ENCODE measurements at regions of chr1 and their contacts with region 1.

Region 1: DNA sequence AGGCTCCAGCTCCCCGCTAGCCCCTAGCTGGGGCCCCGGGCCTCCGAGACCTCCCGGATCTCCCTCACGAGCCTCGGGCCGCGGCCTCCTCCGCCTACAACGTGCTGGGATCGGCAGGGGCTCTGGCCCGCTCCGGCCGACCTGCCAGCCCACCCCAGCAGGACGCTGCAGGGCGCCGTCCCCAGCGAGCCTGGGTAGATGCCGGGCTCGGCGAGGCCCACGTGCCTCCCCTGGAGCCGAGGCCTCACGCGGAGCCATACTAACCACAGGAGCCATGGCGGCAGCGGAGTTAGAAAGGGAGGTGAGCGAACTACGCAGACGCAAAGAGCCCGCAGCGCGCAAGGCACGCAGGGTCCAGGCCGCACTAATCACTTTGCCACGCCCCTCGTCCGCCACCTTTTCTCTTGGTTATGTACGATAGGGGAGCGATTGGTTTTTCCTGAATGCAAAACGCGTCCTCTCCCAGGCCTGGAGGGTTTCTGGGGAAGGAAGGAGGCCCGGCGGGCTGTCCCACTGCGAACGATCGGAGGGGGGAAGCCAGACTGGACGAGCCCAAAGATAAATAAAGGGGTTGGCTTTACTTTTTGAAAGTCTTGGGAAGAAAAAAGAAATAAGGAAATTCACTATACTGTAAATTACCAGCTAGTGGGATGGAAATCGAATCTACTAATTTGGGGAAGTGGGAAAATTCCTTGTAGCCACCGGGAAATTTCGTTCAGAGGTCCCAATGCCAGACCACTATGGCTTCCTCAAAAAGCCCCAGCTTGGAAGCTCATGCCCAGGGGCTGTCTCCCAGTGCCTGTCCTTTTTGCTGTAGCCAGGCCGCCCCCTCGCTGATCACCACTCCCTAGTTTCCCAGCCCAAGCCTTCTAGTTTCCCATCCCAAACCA is at the start of gene RPL22:
- DNase-seq: peak; percentile 98 to 99 (median 98)
- ATAC-seq: peak; percentile 97 to 99 (median 98)
- H3K4me3 ChIP-seq: peak within 1 kb of the TSS; percentile 77 to 100 (median 89)
- H3K27ac ChIP-seq: peak within 1 kb of the TSS; percentile 66 to 93 (median 84)
- H3K4me1 ChIP-seq: peaks cover 8 to 31% (median 21%) of the 10 kb centered on the region in 12 donors
- H3K27me3 ChIP-seq: no peaks in the 10 kb centered on the region
- CTCF ChIP-seq: peak in 1 of 12 donors; percentile 10
- POLR2A ChIP-seq: peak in 1 of 2 donors; percentile 78
- total RNA-seq, gene RPL22: 63.6 to 343 (median 241) TPM

Region 2: DNA sequence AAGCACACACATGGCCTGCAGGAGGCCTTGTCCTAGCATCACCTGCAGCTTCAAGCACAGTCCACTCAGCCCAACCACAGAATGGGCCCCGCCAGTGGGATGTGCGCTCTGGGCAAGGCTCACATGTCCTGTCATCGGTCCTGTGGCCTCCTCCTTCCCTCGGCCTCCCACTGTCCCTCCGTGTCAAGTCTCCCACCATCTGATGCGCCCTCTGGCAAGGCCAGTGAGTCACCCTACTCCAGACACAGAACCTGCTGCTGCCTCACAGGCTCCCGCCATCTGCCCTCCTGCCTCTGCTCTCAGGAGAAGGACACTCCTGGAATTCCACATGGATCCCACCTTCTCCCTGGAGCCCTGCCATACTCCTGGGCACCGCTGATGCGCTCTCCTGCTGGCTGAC is 139.7 kb before region 1 on chr1:
- intact Hi-C with region 1: loop called in 2 of 10 experiments (anchors 10 kb)
- DNase-seq: no peak
- ATAC-seq: no peak
- H3K4me3 ChIP-seq: no peak overlapping the region
- H3K27ac ChIP-seq: no peak overlapping the region
- H3K4me1 ChIP-seq: peaks cover 0 to 44% (median 20%) of the 10 kb centered on the region in 12 donors
- H3K27me3 ChIP-seq: no peaks in the 10 kb centered on the region
- CTCF ChIP-seq: no peak
- POLR2A ChIP-seq: no peak

Region 3: DNA sequence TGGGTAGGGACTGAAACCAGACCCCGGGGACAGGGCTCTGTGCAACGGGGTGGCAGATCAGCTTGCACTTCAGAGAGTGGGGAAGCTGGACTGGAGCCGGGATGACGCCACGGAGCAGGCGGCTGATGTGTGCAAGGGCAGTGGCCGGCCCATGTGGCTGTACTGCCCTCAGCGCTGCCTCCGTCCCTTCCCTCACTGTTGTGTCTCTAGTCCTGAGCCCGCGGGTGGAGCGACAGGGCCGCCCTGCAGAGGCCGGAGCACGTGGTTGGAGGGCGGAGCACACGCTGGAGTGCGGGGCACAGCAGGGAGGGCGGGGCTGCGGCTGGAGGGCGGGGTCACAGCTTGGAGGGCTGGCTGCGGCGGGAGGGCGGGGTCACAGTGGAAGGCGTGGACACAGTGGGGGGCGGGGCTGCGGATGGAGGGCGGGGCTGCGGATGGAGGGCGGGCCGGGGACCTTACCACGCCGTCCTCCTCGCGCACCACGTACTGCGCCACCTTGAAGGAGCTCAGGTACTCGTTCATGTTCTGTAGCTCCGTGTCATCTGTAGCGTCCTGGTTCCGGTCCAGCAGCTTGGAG is 71.9 kb before region 1 on chr1:
- intact Hi-C with region 1: no loop called
- DNase-seq: peak; percentile 60 to 90 (median 79)
- ATAC-seq: peak; percentile 68 to 94 (median 90)
- H3K4me3 ChIP-seq: peak overlapping the region in 5 of 12 donors; percentile 7 to 37 (median 13)
- H3K27ac ChIP-seq: no peak overlapping the region
- H3K4me1 ChIP-seq: peaks cover 0 to 12% (median 0%) of the 10 kb centered on the region in 12 donors
- H3K27me3 ChIP-seq: peaks cover 0 to 26% (median 0%) of the 10 kb centered on the region in 9 donors
- CTCF ChIP-seq: no peak
- POLR2A ChIP-seq: no peak

Measured in heart left ventricle (tissue), 16 donors.